A673 (cell line): ENCODE measurements at regions of chr9 and their contacts with region 1.

Region 1: GRCh38 chr9:35426627-35427026 is 63.3 kb upstream of the RUSC2 start:
- DNase-seq: peak; percentile 6
- H3K4me3 ChIP-seq: no peak overlapping the region
- H3K27ac ChIP-seq: no peak overlapping the region
- H3K4me1 ChIP-seq: no peaks in the 10 kb centered on the region
- H3K27me3 ChIP-seq: no peaks in the 10 kb centered on the region
- CTCF ChIP-seq: no peak

Region 2: DNA sequence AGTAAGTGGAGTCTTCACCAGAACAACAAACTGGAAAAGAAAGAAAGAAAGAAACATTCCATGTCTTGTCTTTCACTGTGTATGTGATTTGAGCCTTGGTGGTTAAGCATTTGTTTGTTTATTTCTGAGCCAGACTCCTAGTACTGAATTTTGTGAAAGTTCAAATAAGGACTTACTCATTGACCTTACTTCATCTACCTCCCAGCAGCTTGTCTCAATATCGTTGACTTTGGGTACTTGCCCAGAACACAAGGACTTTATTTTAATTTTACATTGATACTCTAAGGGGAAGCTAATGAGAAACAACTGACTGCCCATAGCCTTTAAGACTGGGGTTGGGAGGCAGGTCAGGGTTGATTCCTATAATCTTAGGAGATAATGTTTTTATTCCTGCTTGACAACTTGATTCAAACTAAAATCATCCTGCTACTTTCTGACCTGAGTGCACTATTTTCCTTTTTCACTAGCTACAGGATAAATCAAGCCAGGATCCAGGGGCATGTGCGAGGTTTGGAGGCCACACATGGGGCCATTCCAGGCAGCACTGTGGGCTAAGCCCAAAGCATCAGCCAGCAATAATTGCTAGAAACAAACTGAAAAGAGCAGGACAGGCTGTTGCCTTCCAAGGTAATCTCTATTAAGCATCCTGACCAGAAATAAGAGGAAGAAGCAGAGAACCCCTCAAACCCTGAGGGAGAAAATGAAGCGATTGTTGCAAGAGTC is 75.6 kb before region 1 on chr9:
- CTCF ChIA-PET with region 1: no interaction called
- POLR2A ChIA-PET with region 1: no interaction called
- intact Hi-C with region 1: no loop called
- DNase-seq: no peak
- H3K4me3 ChIP-seq: no peak overlapping the region
- H3K27ac ChIP-seq: no peak overlapping the region
- H3K4me1 ChIP-seq: no peaks in the 10 kb centered on the region
- H3K27me3 ChIP-seq: no peaks in the 10 kb centered on the region
- CTCF ChIP-seq: no peak

Region 3: GRCh38 chr9:35415386-35416096 is 11.1 kb before region 1 on chr9:
- CTCF ChIA-PET with region 1: no interaction called
- POLR2A ChIA-PET with region 1: no interaction called
- intact Hi-C with region 1: loop called (anchors 2 kb)
- DNase-seq: no peak
- H3K4me3 ChIP-seq: no peak overlapping the region
- H3K27ac ChIP-seq: no peak overlapping the region
- H3K4me1 ChIP-seq: no peaks in the 10 kb centered on the region
- H3K27me3 ChIP-seq: no peaks in the 10 kb centered on the region
- CTCF ChIP-seq: 0 out of 2 replicates have a peak, but pooled peaks have one; percentile 14